IMR-90 (cell line): ENCODE measurements at regions of chr7 and their contacts with region 1.

Region 1: GRCh38 chr7:137025469-137026175 is 157.2 kb downstream of the CHRM2 start:
- DNase-seq: peak; percentile 93
- ATAC-seq: peak; percentile 67
- H3K4me3 ChIP-seq: no peak overlapping the region
- H3K27ac ChIP-seq: peak overlapping the region; percentile 99
- H3K4me1 ChIP-seq: peaks cover 6% of the 10 kb centered on the region
- H3K27me3 ChIP-seq: no peaks in the 10 kb centered on the region
- CTCF ChIP-seq: no peak
- POLR2A ChIP-seq: no peak
- RAD21 ChIP-seq: no peak; the same call in 1 of the 2 replicates

Region 2: DNA sequence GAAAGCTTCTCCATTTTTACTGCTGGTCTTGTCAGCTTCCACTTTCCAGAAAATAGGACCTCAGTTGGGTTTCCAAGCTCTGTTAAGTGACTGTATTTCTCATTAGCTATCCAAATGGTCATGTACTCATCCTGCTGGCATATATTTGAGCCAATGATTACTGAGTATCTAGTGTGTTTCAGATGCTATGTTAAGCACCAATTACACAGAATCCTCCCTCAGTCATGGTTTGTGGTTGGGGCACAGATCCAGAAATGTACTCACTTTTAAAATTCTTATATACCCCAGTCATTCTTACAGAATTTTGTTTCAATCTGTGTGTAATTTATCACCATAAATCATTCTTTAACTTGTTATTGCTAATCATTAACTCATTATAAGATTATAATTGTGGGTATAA is 686.2 kb before region 1 on chr7:
- CTCF ChIA-PET with region 1: no interaction called
- POLR2A ChIA-PET with region 1: no interaction called
- dilution Hi-C with region 1: no loop called
- in situ Hi-C with region 1: no loop called
- intact Hi-C with region 1: no loop called
- DNase-seq: no peak
- ATAC-seq: no peak
- H3K4me3 ChIP-seq: no peak overlapping the region
- H3K27ac ChIP-seq: no peak overlapping the region
- H3K4me1 ChIP-seq: no peaks in the 10 kb centered on the region
- H3K27me3 ChIP-seq: no peaks in the 10 kb centered on the region
- CTCF ChIP-seq: no peak
- POLR2A ChIP-seq: no peak
- RAD21 ChIP-seq: no peak

Region 3: DNA sequence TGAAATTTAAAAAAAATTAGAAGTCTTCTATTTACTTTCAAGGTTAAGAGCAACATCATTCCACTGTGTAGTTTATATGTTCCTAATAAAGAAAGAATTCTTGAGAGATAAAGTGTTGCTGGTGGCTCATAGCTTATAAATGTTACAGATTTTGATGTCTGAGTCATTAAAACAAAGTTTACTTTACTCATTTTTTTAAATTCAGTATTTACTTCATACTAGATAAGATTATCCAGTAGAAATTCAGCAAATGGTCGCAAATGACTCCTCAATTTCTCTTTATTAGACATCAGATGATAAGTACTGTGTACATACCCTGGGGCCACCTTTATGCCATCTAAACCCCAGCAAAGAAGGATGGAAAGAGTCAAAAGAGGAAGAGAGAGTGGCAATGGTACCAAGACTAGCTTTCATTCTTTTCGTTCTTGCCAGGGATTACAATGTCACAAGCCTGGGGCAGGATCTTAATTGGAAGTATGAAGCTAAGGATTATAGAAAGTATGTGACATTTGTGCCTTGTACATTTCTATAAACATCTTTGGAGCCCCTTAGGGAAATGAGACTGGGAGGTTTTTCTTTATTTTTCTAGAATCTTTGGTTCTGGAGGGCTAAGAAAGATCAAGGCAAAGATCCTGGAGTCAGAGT is 48.9 kb after region 1 on chr7:
- CTCF ChIA-PET with region 1: no interaction called
- POLR2A ChIA-PET with region 1: no interaction called
- dilution Hi-C with region 1: no loop called
- in situ Hi-C with region 1: no loop called
- intact Hi-C with region 1: loop called (anchors 1 kb)
- DNase-seq: peak; percentile 87
- ATAC-seq: peak; percentile 77
- H3K4me3 ChIP-seq: peak overlapping the region; percentile 46; the same call in 1 of the 2 replicates
- H3K27ac ChIP-seq: peak overlapping the region; percentile 100
- H3K4me1 ChIP-seq: peaks cover 18% of the 10 kb centered on the region
- H3K27me3 ChIP-seq: no peaks in the 10 kb centered on the region
- CTCF ChIP-seq: no peak
- POLR2A ChIP-seq: no peak
- RAD21 ChIP-seq: no peak

Region 4: GRCh38 chr7:137151041-137151689 is 125.5 kb after region 1 on chr7:
- CTCF ChIA-PET with region 1: no interaction called
- POLR2A ChIA-PET with region 1: interaction called, 15 read pairs
- dilution Hi-C with region 1: no loop called
- in situ Hi-C with region 1: no loop called
- intact Hi-C with region 1: loop called (anchors 2 kb)
- DNase-seq: peak; percentile 94
- ATAC-seq: peak; percentile 57
- H3K4me3 ChIP-seq: no peak overlapping the region
- H3K27ac ChIP-seq: peak overlapping the region; percentile 78
- H3K4me1 ChIP-seq: peaks cover 20% of the 10 kb centered on the region
- H3K27me3 ChIP-seq: no peaks in the 10 kb centered on the region
- CTCF ChIP-seq: no peak
- POLR2A ChIP-seq: no peak
- RAD21 ChIP-seq: no peak